WTC11 (cell line): ENCODE measurements at regions of chr3 and their contacts with region 1.

Region 1: DNA sequence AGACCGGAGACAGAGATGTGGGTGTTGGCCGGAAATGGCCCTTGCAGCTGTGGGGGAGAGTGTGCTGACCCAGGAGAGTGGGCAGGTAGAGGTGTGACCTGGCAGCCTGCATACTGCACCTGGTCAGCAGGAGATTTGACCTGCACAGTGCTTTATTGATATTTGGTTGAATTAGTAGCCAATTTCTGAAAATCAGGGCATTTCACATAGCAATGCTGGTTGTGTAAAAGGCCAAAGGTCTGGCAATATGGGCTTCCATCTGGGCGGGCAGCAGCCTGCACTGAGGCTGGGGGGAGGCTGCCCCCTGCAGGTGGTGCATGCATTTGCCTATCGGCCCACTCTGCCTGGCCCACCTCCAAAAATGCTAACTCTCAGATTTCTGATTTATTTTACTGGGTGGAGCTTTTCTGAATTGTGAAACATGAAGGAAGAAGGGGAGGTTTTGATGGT is 9.4 kb upstream of the MGLL start:
- DNase-seq: peak; percentile 77
- ATAC-seq: peak; percentile 94
- H3K4me3 Mint-ChIP-seq: no peak overlapping the region
- H3K27ac Mint-ChIP-seq: no peak overlapping the region
- H3K4me1 Mint-ChIP-seq: peaks cover 9% of the 10 kb centered on the region
- H3K27me3 Mint-ChIP-seq: no peaks in the 10 kb centered on the region
- CTCF ChIP-seq: peak; percentile 90

Region 2: DNA sequence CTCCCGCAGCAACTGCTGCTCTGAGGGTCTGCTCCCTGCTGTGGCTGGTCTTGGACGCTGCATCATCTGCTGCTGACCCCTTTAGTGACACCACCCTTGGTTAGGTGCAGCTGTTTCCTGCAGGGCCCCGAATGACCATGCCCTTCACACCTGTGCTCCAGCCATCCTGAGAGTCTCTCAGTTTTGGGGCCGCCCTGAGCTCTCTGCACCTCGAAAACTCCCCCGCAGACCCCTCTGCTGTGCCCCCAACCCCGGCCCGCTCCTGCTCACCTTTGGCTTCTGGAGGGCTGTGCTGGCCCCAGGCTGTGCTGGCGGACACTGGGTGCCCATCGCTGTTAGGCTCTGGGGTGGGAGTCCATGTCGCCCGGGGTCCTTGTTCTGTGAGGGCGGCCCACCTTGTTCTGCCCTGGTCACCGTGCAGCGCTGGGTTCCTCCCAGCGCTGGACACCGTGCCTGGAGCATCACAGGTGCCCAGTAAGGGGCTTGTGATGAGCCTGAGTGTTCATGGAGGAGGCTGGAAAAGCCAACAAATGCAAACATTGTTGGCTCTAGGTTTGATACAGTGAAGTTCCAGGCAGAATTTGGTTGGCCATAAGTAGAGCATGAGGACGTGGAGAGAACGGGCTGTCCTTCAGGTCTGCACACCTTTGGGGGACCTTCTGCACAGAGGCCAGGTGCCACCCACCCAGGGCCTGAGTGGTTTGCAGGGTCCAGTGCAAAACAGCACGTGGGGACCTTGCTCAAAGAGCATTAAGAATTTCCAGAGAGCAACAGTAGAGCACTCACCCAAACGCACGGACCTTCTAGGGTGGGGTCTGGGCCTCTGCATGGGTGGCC is 146.7 kb before region 1 on chr3:
- CTCF ChIA-PET with region 1: interaction called, 38 read pairs
- POLR2A ChIA-PET with region 1: no interaction called
- DNase-seq: peak; percentile 7
- ATAC-seq: no peak
- H3K4me3 Mint-ChIP-seq: no peak overlapping the region
- H3K27ac Mint-ChIP-seq: no peak overlapping the region
- H3K4me1 Mint-ChIP-seq: peaks cover 26% of the 10 kb centered on the region
- H3K27me3 Mint-ChIP-seq: no peaks in the 10 kb centered on the region
- CTCF ChIP-seq: no peak

Region 3: DNA sequence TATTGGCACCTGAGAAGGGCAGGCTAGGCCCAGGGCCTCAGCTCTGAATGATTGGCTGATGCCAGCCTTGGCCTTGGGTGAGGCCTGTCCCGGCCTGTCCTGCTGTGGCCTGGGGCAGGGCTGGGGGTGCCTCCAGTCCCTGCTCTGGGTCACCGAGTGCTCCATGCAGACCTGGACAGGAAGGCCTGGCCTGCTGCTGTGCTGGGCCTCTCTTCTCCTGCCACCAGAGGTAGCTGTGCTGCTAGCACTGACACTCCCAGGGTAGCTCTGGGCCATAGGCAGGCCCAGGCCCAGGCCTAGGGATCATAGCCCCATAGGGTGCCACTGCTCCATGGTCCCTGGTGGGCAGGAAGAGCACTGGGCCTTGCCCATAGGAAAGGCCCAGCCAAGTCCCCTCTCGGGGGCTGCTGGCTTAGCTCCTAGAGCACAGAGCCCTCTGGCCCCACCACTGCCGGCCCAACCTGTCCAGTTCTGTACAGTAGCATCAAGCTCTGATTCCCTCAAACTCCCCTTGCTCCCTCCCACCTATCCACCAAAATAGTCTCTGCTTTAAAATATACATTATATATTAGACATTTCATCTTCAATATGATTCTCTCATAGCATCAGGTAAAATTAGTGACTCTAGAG is 140.8 kb before region 1 on chr3:
- CTCF ChIA-PET with region 1: interaction called, 38 read pairs
- POLR2A ChIA-PET with region 1: no interaction called
- DNase-seq: peak; percentile 71
- ATAC-seq: peak; percentile 94
- H3K4me3 Mint-ChIP-seq: no peak overlapping the region
- H3K27ac Mint-ChIP-seq: no peak overlapping the region
- H3K4me1 Mint-ChIP-seq: peaks cover 19% of the 10 kb centered on the region
- H3K27me3 Mint-ChIP-seq: no peaks in the 10 kb centered on the region
- CTCF ChIP-seq: no peak

Region 4: DNA sequence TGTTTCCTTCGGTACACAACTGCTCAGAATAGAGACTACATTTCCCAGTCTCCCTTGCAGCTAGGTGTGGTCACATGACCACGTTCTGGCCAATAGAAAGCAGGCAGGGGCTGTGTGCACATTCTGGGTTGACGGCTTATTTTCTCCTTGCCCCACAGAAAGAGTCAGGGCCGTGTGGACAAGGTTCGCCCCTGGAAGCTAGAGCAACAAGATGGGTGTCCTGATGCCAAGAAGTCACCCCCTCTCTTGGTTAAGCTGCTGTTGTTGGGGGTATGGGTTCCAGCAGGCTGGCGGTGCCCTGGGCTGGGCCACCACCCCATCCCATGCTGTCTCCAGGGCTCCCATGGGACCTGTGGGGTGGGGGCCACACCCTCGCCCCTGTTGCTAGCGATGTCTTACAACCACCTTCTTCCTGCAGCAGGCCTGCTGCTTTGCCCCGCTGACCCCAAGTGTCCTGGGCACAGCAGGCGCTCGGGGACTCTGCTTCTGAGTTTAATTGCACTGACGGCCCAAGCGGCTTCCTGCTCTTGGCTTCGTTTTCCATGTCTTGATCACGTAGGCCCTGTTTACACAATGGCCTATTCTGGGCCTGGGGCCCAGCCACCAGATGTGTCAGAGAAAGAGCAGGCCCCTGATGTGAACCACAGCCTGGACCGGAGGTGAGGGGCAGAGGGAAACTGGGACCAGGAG is 134.1 kb before region 1 on chr3:
- CTCF ChIA-PET with region 1: interaction called, 38 read pairs
- POLR2A ChIA-PET with region 1: no interaction called
- DNase-seq: peak; percentile 64
- ATAC-seq: peak; percentile 67
- H3K4me3 Mint-ChIP-seq: peak overlapping the region; percentile 39
- H3K27ac Mint-ChIP-seq: no peak overlapping the region
- H3K4me1 Mint-ChIP-seq: no peaks in the 10 kb centered on the region; the same call in 1 of the 2 replicates
- H3K27me3 Mint-ChIP-seq: no peaks in the 10 kb centered on the region
- CTCF ChIP-seq: no peak

Region 5: DNA sequence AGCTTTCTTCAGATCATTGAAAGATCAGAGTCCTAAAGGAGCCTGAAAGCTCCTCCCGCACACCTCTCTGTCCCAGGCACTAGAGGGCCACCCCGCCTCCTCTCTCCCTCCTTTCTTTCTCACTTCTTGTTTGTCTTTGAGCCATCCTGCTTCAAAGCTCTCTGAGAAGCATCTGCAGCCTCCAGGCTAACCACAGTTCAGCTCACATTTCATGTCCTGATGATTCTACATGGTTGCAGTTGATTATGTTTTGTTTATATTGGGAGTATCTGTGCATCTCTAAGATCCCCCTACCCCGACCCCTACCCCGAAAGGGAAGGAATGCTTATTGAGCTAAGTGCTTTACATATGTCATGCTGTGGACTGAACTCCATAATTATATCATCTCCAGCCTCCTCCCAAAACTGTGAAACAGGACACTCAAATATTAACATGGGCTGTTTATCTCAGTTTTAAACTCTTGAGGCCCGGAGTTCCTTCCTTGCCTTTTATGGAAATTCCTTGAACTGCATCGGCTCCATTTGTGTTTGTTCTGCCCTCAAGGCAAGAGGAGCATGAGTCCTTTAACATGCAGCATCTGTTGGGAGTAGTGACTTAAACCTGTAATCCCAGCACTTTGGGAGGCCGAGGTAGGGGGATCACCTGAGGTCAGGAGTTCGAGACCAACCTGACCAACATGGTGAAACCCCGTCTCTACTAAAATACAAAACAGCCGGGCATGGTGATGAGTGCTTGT is 40.4 kb before region 1 on chr3:
- CTCF ChIA-PET with region 1: interaction called, 13 read pairs
- POLR2A ChIA-PET with region 1: no interaction called
- DNase-seq: peak; percentile 49
- ATAC-seq: peak; percentile 95
- H3K4me3 Mint-ChIP-seq: no peak overlapping the region
- H3K27ac Mint-ChIP-seq: no peak overlapping the region
- H3K4me1 Mint-ChIP-seq: peaks cover 16% of the 10 kb centered on the region
- H3K27me3 Mint-ChIP-seq: no peaks in the 10 kb centered on the region
- CTCF ChIP-seq: no peak

Region 6: DNA sequence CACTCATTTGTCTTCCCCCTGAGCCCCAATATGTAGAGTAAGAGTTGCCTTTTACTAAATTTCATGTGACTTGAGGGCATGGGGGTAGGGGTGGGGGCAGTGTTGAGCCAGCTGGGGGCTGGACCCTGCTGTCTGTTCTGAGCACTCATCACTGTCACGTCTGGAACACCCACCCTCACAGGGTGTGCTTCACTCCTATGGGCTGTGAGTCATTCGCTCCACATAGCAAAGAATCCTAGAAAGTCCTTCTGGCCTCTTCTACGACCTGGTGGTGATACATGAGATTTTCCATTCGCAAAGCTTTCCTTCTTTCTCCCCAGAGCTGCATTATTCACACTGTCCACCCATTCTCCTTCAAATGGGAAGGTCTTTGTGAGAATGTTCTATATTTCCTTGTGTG is 34.2 kb after region 1 on chr3:
- CTCF ChIA-PET with region 1: no interaction called
- POLR2A ChIA-PET with region 1: no interaction called
- DNase-seq: no peak
- ATAC-seq: peak; percentile 20; the same call in 1 of the 2 replicates
- H3K4me3 Mint-ChIP-seq: no peak overlapping the region
- H3K27ac Mint-ChIP-seq: no peak overlapping the region
- H3K4me1 Mint-ChIP-seq: no peaks in the 10 kb centered on the region
- H3K27me3 Mint-ChIP-seq: no peaks in the 10 kb centered on the region
- CTCF ChIP-seq: no peak

Region 7: GRCh38 chr3:128095222-128095703 is 263.5 kb after region 1 on chr3:
- CTCF ChIA-PET with region 1: no interaction called
- POLR2A ChIA-PET with region 1: no interaction called
- DNase-seq: peak; percentile 80
- ATAC-seq: peak; percentile 83
- H3K4me3 Mint-ChIP-seq: peak overlapping the region; percentile 19; the same call in 1 of the 2 replicates
- H3K27ac Mint-ChIP-seq: peak overlapping the region; percentile 79
- H3K4me1 Mint-ChIP-seq: peaks cover 61% of the 10 kb centered on the region
- H3K27me3 Mint-ChIP-seq: no peaks in the 10 kb centered on the region
- CTCF ChIP-seq: peak; percentile 41; the same call in 1 of the 2 replicates